ENCODE measurements at regions of chr4 and their contacts with region 1.

Region 1: GRCh38 chr4:183504064-183504929 is 561 bp upstream of the ING2 start:
- DNase-seq: peak; percentile 99
- H3K4me3 Mint-ChIP-seq: peak overlapping the region; percentile 93
- H3K27ac Mint-ChIP-seq: peak overlapping the region; percentile 92
- H3K4me1 Mint-ChIP-seq: peaks cover 28% of the 10 kb centered on the region
- H3K27me3 Mint-ChIP-seq: no peaks in the 10 kb centered on the region

Region 2: DNA sequence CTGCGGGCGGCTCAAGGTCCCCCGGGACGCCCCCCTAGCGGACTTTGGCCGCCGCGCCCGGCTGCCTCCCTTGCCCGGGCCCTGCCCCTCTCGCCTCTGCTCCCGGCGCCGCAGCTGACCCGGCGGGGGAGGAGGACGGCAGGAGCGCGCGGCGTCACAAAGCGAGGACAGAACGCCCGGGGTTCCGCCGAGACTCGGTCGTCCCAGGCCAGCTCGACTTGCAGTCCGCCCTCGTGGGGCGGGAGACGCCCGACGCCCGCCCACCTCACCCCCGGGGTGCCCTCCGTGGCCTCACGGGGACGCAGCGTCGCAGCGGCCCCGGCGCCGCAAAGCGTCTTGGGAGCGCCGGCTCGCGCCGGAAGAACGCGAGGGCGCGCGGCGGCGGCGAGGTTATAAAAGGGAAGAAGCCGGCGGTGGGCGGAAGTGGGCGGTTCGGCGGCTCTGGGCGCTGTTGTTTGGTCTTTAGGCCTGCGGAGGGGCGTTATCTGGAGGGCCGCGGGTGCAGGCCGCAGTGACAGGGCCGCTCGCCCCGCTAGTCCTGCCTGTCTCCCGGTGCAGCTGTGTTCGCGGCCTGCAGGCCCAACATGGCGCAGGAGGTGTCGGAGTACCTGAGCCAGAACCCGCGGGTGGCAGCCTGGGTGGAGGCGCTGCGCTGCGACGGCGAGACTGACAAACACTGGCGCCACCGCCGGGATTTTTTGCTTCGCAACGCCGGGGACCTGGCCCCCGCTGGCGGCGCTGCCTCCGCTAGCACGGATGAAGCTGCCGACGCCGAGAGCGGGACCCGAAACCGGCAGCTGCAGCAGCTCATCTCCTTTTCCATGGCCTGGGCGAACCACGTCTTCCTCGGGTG is 59.9 kb before region 1 on chr4 and contains the start of gene CDKN2AIP:
- CTCF ChIA-PET with region 1: interaction called, 6 read pairs
- POLR2A ChIA-PET with region 1: interaction called, 41 read pairs
- intact Hi-C with region 1: loop called (anchors 1 kb)
- DNase-seq: peak; percentile 95
- H3K4me3 Mint-ChIP-seq: peak within 1 kb of the TSS; percentile 96
- H3K27ac Mint-ChIP-seq: peak within 1 kb of the TSS; percentile 98
- H3K4me1 Mint-ChIP-seq: peaks cover 41% of the 10 kb centered on the region
- H3K27me3 Mint-ChIP-seq: no peaks in the 10 kb centered on the region
- total RNA-seq, gene CDKN2AIP: 23.0 to 23.7 TPM

Region 3: GRCh38 chr4:183602557-183603027 is 98.3 kb after region 1 on chr4:
- CTCF ChIA-PET with region 1: interaction called, 5 read pairs
- POLR2A ChIA-PET with region 1: interaction called, 3 read pairs
- intact Hi-C with region 1: loop called (anchors 1 kb)
- DNase-seq: no peak
- H3K4me3 Mint-ChIP-seq: no peak overlapping the region
- H3K27ac Mint-ChIP-seq: no peak overlapping the region
- H3K4me1 Mint-ChIP-seq: no peaks in the 10 kb centered on the region
- H3K27me3 Mint-ChIP-seq: peaks cover 3% of the 10 kb centered on the region

Region 4: DNA sequence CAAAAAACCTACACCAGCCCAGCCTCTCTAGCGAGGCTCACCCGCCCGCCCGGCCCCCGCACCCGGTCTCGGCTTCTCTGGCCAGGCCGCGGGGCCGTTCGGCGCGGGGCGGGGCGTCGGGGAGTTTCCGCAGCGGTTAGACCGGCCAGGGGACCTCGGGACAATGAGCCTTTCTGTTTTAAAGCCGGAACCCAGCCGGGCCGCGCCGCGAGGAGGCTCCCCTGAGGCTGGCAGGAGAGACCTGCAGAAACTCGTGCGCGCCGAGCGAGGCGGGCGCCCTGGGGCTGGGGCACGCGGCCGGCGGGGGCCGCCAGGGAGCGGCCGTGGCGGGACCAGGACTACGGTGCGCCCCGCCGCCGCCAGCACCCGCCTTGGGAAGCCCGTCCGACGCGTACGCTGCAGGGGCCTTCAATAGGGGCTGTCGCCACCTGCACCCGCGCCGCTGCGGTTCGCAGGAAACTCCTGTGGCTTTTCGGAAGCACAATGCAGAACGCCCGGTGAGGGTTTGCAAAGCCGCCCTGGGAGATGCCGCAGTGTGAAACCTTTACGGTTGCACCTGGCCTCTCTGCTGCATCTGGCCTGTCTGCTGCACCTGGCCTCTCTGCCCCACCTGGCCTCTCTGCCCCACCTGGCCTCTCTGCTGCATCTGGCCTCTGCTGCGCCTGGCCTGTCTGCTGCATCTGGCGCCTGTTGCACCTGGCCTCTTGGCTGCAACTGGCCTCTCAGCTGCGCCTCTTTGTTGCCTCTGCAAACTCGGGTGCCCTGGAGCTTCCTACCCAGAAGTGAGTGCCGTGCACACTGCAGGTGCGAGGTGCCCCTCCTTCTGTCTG is 218.6 kb after region 1 on chr4:
- CTCF ChIA-PET with region 1: no interaction called
- POLR2A ChIA-PET with region 1: no interaction called
- intact Hi-C with region 1: loop called (anchors 10 kb)
- DNase-seq: peak; percentile 63
- H3K4me3 Mint-ChIP-seq: peak overlapping the region; percentile 69
- H3K27ac Mint-ChIP-seq: no peak overlapping the region
- H3K4me1 Mint-ChIP-seq: peaks cover 11% of the 10 kb centered on the region
- H3K27me3 Mint-ChIP-seq: peaks cover 7% of the 10 kb centered on the region

Region 5: DNA sequence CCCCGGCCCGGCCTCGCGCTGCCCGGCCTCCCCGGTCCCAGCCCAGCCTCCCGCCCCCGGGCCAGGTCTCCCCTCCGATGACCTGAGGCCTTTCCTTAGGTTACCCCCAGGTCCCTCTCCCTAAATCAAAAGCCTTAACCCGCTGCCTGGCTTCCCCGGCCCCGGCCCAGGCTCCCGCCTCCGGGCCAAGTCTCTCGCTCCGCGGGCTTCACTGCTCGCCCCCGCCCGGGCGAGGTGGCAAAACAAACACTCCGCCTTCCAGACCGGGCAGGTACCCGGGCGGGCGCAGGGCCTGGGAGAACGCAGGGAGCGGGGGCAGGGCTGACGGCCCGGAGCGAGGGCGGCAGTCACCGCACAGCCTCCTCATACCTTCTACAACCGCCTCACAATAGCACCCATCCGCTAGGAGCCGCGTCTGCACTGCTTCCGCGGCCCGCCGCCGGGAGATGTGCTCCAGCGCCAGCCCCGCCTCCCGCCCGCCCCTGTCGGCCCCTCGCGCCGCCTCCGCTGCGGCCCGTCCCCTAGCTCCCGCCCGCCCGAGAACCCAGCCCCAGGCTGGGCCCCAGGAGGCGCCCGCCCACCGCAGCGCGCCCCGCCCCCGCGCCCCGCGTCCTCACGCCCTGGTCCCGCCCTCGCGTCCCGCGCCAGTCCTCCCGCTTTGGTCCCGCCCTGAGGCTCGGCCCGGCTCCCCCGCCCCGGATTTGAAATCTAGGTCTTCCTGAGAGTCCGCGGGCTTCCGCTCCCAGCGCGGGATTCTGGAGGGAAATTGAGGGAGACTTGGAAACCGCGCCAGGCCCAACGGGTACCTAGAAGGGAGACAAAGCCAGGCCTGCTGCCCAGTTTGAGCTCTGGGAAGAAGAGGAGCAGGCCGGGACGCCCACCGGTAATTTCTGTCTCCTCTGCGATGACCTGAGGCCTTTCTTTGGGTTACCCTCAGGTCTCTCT is 1145.0 kb after region 1 on chr4 and contains the starts of genes CASP3 and PRIMPOL:
- CTCF ChIA-PET with region 1: no interaction called
- POLR2A ChIA-PET with region 1: no interaction called
- intact Hi-C with region 1: loop called (anchors 1 kb)
- DNase-seq: peak; percentile 98
- H3K4me3 Mint-ChIP-seq: peak within 1 kb of the TSS; percentile 91
- H3K27ac Mint-ChIP-seq: peak within 1 kb of the TSS; percentile 91
- H3K4me1 Mint-ChIP-seq: peaks cover 50% of the 10 kb centered on the region
- H3K27me3 Mint-ChIP-seq: no peaks in the 10 kb centered on the region
- total RNA-seq, gene CASP3: 54.0 to 54.4 TPM
- total RNA-seq, gene PRIMPOL: 23.1 to 27.1 TPM

Region 6: GRCh38 chr4:185471235-185472102 is 1967.2 kb after region 1 on chr4 and contains the start of gene CCDC110:
- CTCF ChIA-PET with region 1: no interaction called
- POLR2A ChIA-PET with region 1: no interaction called
- intact Hi-C with region 1: loop called (anchors 10 kb)
- DNase-seq: peak; percentile 94
- H3K4me3 Mint-ChIP-seq: peak within 1 kb of the TSS; percentile 77
- H3K27ac Mint-ChIP-seq: no peak within 1 kb of the TSS
- H3K4me1 Mint-ChIP-seq: peaks cover 4% of the 10 kb centered on the region
- H3K27me3 Mint-ChIP-seq: peaks cover 9% of the 10 kb centered on the region
- total RNA-seq, gene CCDC110: 0.10 to 0.26 TPM

Measured in activated CD4-positive, alpha-beta memory T cell treated with anti-CD3 and anti-CD28 coated beads for 36 hours (primary cell).